ENCODE measurements at regions of chr9 and their contacts with region 1.

Region 1: GRCh38 chr9:71210326-71210725 is 88.9 kb upstream of the TRPM3 start:
- DNase-seq: no peak
- H3K4me3 ChIP-seq: no peak overlapping the region
- H3K27ac ChIP-seq: no peak overlapping the region
- H3K4me1 ChIP-seq: no peaks in the 10 kb centered on the region; a peak in 1 of 7 replicates
- H3K27me3 ChIP-seq: no peaks in the 10 kb centered on the region
- CTCF ChIP-seq: peak in 2 of 3 experiments; percentile 56 to 78; a peak in 3 of 4 replicates
- EP300 ChIP-seq: no peak
- POLR2A ChIP-seq: no peak
- RAD21 ChIP-seq: peak; percentile 92 to 94

Region 2: DNA sequence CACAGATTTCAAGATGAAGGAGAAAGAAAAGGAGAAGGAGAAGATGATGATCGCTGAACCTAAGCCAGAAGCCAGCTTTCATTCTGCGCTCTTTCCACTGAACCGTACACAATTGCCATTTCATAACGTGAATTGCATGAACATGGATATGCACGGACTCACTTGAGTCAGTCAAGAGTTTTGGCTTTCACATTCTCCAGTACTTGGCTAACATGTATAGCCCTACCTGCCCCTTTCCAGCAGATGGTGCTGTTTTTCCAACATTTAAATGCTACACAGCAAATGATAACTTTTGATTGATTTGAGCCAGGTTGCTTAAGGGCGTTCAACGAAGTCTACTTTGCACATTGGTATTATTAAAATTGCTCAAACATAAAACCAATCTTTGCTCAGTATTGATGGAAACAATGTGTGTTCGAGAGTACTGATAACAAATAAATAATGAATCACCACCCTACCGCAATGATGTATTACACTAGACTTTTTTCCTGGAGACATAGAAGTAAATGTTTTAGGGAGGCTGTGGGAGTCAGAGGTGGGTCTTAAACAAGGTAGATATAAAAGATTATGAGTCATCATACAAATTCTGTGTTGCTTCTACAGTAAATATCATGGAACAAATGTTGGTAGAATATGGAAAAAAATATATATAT is 285.3 kb before region 1 on chr9:
- CTCF ChIA-PET with region 1: interaction called, 31 read pairs
- POLR2A ChIA-PET with region 1: no interaction called
- DNase-seq: no peak
- H3K4me3 ChIP-seq: no peak overlapping the region
- H3K27ac ChIP-seq: no peak overlapping the region
- H3K4me1 ChIP-seq: no peaks in the 10 kb centered on the region
- H3K27me3 ChIP-seq: no peaks in the 10 kb centered on the region
- CTCF ChIP-seq: peak in 2 of 3 experiments; percentile 72 to 91; a peak in 3 of 4 replicates
- EP300 ChIP-seq: no peak
- POLR2A ChIP-seq: no peak
- RAD21 ChIP-seq: peak; percentile 89 to 93

Region 3: GRCh38 chr9:71506821-71507220 is 296.5 kb after region 1 on chr9:
- CTCF ChIA-PET with region 1: no interaction called
- POLR2A ChIA-PET with region 1: no interaction called
- DNase-seq: no peak
- H3K4me3 ChIP-seq: no peak overlapping the region
- H3K27ac ChIP-seq: no peak overlapping the region
- H3K4me1 ChIP-seq: no peaks in the 10 kb centered on the region; a peak in 1 of 7 replicates
- H3K27me3 ChIP-seq: no peaks in the 10 kb centered on the region
- CTCF ChIP-seq: no peak
- EP300 ChIP-seq: no peak
- POLR2A ChIP-seq: no peak
- RAD21 ChIP-seq: no peak